ENCODE measurements at regions of chr1 and their contacts with region 1.

Region 1: GRCh38 chr1:30779294-30780071 is 21.9 kb upstream of the LAPTM5 start:
- DNase-seq: peak; percentile 86
- H3K4me3 ChIP-seq: no peak overlapping the region
- H3K27ac ChIP-seq: no peak overlapping the region
- H3K4me1 ChIP-seq: peaks cover 12% of the 10 kb centered on the region
- CTCF ChIP-seq: peak; percentile 97

Region 2: GRCh38 chr1:30618335-30618747 is 161.1 kb before region 1 on chr1:
- CTCF ChIA-PET with region 1: no interaction called
- POLR2A ChIA-PET with region 1: no interaction called
- intact Hi-C with region 1: no loop called
- DNase-seq: no peak
- H3K4me3 ChIP-seq: no peak overlapping the region
- H3K27ac ChIP-seq: no peak overlapping the region
- H3K4me1 ChIP-seq: no peaks in the 10 kb centered on the region
- CTCF ChIP-seq: no peak

Region 3: DNA sequence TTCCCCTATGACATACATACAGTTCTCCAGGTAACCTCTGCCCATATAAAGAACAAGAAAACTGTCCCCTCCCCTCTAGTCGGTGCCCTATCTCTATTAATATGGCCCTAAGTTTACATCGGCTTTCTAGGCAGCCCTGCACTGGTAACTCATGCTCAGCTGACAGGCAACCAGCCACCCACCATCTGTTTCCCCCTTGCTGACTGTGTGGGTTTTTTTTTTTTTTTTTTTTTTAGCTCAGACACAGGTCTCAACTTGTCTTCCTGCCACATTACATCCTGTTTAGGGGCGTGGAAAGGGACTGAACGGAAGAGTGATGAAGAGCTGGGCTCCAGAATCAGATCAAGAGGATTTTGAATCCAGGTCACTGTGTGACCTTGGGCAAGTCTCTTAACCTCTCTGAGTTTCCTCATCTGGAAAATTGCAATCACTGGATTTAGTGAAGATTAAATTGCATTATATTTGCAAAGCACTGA is 35.9 kb before region 1 on chr1:
- CTCF ChIA-PET with region 1: interaction called, 4 read pairs
- POLR2A ChIA-PET with region 1: interaction called, 4 read pairs
- intact Hi-C with region 1: loop called (anchors 5 kb)
- DNase-seq: peak; percentile 89
- H3K4me3 ChIP-seq: peak overlapping the region; percentile 31
- H3K27ac ChIP-seq: peak overlapping the region; percentile 74
- H3K4me1 ChIP-seq: peaks cover 85% of the 10 kb centered on the region
- CTCF ChIP-seq: no peak; the same call in 1 of the 2 replicates

Region 4: DNA sequence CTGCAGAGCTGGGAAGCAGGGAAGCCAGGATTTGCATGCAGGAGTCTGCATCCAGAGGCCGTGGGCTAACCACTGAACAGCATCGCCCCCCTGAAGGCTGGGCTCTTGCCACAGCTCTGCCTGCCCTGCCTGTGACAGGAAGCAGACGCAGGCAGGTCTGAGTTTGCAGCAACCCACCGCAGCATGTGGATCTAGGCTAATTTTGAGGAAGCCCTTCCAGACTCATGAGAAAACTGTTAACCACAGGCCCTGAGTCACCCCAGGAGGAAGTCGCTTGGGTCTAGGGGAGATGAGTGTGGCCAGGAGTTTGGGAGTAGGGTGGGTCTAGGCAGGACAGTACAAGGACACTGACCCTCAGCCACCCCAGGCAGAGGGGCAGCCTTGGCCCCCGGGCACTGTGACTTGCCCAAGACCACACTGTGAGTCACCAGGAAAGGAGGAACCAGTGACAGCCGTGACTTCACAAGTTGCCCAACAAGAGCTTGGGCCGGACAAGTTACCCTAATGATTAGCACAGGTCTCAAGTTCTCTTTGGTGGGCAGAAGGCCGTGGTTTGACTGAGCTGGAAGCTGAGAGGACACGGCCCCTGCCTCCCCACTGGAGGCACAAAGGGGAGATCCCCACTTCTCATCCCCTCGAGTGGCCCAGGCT is 22.8 kb before region 1 on chr1:
- CTCF ChIA-PET with region 1: interaction called, 7 read pairs
- POLR2A ChIA-PET with region 1: interaction called, 9 read pairs
- intact Hi-C with region 1: loop called (anchors 1 kb)
- DNase-seq: peak; percentile 80
- H3K4me3 ChIP-seq: peak overlapping the region; percentile 69
- H3K27ac ChIP-seq: peak overlapping the region; percentile 99
- H3K4me1 ChIP-seq: peaks cover 99% of the 10 kb centered on the region
- CTCF ChIP-seq: no peak

Region 5: GRCh38 chr1:30911046-30911954 is 131.8 kb after region 1 on chr1:
- CTCF ChIA-PET with region 1: interaction called, 3 read pairs
- POLR2A ChIA-PET with region 1: no interaction called
- intact Hi-C with region 1: loop called (anchors 1 kb)
- DNase-seq: peak; percentile 74
- H3K4me3 ChIP-seq: no peak overlapping the region
- H3K27ac ChIP-seq: no peak overlapping the region
- H3K4me1 ChIP-seq: peaks cover 5% of the 10 kb centered on the region
- CTCF ChIP-seq: peak; percentile 94

Region 6: DNA sequence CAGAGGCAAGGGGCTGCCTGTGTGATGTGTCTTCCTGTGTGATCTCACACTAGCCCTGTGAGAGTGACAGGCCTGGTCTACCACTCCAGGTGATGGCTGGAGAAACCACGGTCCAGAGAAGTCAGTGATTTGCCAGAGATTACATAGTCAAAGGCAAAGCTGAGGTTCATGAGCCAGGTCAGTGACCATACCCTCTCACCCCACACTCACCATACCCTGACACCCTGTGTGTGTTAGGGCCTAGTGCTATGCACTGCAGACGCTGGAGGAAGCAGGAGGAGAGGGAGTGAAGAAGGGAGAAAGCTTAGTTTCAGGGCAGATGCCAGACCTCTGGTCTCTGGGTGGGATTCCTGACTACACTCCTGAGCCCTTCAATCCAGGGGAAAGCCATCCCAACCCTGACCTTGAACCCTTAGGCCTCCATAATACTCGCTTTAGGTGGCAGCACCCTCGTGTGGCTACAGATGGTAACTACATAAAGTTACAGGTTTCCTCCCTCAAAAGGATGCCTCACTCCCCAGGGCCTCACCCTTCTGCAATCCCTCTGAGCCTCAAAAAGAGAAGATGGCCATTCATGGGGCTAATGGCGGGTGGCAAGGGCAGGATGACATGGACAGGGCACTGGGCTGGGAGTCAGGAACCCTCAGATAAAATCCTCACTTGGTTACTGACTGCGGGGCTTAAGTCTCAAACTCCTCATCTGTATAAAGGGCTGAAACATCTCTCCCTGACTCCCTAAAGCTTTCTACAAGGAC is 149.8 kb after region 1 on chr1:
- CTCF ChIA-PET with region 1: no interaction called
- POLR2A ChIA-PET with region 1: no interaction called
- intact Hi-C with region 1: loop called (anchors 5 kb)
- DNase-seq: peak; percentile 60
- H3K4me3 ChIP-seq: no peak overlapping the region
- H3K27ac ChIP-seq: no peak overlapping the region
- H3K4me1 ChIP-seq: no peaks in the 10 kb centered on the region
- CTCF ChIP-seq: peak; percentile 87

Region 7: DNA sequence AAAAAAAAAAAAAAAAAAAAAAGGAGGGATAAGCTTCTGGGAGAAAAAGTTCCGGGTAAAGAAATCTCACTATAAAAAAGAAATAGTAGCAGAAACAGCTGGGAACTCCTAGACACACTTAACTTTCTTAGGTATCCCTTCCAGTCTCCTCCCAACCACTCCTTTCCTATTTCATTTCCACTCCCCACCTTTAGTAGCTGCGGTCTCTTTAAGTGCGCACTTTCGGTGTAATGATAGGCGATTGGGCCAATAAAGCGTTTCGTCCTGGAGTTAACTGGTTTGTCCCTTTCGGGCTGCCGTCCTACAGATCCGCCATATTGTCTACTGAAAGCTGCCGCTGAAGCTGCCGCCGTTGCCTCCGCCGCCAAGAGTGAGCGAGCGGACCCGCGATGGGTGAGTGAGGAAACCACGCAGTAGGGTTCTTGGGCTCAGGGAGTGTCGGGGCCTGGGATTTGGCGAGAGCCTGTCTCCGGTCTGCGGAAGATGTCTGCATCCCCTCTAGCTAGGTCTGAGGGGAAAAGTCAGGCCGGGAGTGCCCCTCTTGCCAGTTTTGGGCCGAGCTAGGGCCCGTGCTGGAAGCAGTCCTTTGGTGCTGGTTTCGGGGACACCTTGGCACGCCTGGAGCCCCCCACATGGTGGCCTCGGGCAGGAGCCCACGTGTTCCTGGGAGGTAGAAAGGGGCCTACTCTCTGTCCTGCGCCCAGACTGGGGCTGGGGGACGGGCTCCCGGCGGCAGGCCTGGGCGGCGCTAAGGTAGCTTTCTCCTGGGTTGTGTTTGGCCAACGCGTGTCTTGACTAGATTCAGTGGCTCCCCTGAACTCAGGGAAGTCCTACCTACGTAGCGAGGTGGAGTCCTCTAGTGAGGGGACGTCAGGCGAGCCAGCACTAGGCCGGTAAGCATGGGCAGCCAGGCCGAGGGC is 1328.5 kb after region 1 on chr1 and contains the start of gene KPNA6:
- CTCF ChIA-PET with region 1: no interaction called
- POLR2A ChIA-PET with region 1: no interaction called
- intact Hi-C with region 1: no loop called
- DNase-seq: peak; percentile 96
- H3K4me3 ChIP-seq: peak within 1 kb of the TSS; percentile 97
- H3K27ac ChIP-seq: peak within 1 kb of the TSS; percentile 81
- H3K4me1 ChIP-seq: peaks cover 29% of the 10 kb centered on the region
- CTCF ChIP-seq: no peak
- total RNA-seq, gene KPNA6: 16.6 and 19.5 TPM in 2 replicates